ENCODE measurements at regions of chr18 and their contacts with region 1.

Region 1: DNA sequence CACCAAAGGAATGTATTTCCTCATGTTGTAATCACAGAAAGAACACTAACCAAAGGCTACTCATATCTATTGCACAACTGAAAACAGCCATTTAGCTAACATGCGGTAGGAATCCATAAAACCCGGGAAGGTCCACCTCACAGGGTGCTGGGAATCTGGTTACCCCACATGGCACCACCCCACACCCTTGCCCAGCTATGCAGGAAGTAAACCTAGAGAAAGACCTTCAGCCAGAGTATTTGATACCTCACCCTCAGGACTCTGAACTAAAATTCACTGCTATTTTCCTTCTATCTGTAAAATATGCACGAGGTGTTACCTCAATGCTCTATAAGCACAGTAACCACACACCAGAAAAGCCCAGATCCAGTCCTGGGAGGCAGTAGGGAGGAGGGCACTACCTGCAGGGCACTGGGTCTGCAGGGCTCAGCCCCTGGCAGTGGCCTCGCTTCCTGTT is 45.8 kb downstream of the PTPN2 start:
- DNase-seq: peak; percentile 92 to 99
- H3K4me3 ChIP-seq: peak overlapping the region; percentile 45; the same call in 1 of the 2 replicates
- H3K27ac ChIP-seq: peak overlapping the region; percentile 100
- H3K4me1 ChIP-seq: peaks cover 53% of the 10 kb centered on the region
- H3K27me3 ChIP-seq: no peaks in the 10 kb centered on the region
- CTCF ChIP-seq: no peak

Region 2: GRCh38 chr18:12679183-12679786 is 158.9 kb before region 1 on chr18:
- CTCF ChIA-PET with region 1: no interaction called
- POLR2A ChIA-PET with region 1: no interaction called
- intact Hi-C with region 1: no loop called
- DNase-seq: no peak
- H3K4me3 ChIP-seq: no peak overlapping the region
- H3K27ac ChIP-seq: no peak overlapping the region
- H3K4me1 ChIP-seq: no peaks in the 10 kb centered on the region
- H3K27me3 ChIP-seq: no peaks in the 10 kb centered on the region
- CTCF ChIP-seq: no peak

Region 3: GRCh38 chr18:12862467-12862866 is 24.3 kb after region 1 on chr18:
- CTCF ChIA-PET with region 1: no interaction called
- POLR2A ChIA-PET with region 1: interaction called, 3 read pairs
- intact Hi-C with region 1: loop called (anchors 1 kb)
- DNase-seq: peak; percentile 87 to 88
- H3K4me3 ChIP-seq: no peak overlapping the region
- H3K27ac ChIP-seq: peak overlapping the region; percentile 85
- H3K4me1 ChIP-seq: peaks cover 32% of the 10 kb centered on the region
- H3K27me3 ChIP-seq: no peaks in the 10 kb centered on the region
- CTCF ChIP-seq: no peak

Region 4: DNA sequence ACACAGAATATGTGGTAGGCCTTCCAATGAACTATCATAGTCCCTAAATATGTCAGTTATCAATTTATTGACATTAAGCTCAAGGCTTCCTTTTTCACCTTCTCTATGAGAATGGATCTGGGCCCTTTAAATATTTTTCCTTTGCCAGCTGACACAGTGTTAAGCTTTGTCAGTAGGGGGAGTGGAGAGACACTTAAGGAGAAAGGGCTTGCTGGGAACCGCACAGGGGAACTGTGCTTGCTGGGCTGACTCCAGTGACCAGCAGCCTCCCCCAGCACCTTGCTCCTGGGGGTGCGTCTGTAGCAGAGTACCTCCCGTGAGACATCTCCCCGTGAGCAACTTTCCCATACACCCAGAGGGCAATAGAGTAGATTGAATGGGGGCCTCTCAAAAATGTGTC is 52.3 kb after region 1 on chr18:
- CTCF ChIA-PET with region 1: interaction called, 4 read pairs
- POLR2A ChIA-PET with region 1: interaction called, 12 read pairs
- intact Hi-C with region 1: loop called (anchors 1 kb)
- DNase-seq: peak; percentile 22 to 59
- H3K4me3 ChIP-seq: peak overlapping the region; percentile 6; the same call in 1 of the 2 replicates
- H3K27ac ChIP-seq: peak overlapping the region; percentile 95
- H3K4me1 ChIP-seq: peaks cover 41% of the 10 kb centered on the region
- H3K27me3 ChIP-seq: no peaks in the 10 kb centered on the region
- CTCF ChIP-seq: peak; percentile 45; the same call in 1 of the 2 replicates

Region 5: DNA sequence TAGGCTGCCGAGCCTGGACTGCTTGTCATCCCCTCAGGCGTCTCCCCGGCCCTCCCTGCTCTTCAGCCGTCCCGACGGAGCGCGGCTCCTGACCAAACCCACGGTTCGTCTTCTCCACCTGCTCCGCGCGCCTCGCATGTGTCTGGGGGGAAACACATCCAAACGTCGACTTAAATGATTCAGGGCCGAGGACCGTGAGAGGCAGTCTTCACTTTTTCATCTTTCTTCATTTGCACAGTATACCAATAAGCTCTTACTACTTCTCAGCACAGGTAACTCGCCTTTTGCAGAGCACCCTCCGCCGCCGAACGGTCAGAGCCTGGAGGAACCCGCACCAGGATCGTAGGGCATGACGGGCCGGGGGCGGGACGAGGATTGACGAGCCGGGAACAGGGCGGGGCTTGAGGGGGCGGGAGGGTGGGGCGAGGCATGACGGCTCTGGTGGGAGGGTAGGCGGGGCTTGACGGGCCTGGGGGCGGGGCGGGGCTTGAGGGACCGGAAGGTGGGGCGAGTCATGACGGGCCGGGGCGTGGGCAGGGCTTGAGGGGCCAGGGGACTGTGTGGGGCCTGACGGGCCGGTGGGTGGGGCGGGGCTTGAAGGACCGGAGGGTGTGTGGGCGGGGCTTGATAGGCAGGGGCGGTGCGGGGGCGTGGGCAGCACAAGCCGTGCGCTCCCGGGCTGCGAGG is 109.3 kb after region 1 on chr18 and contains the start of gene SEH1L:
- CTCF ChIA-PET with region 1: interaction called, 3 read pairs
- POLR2A ChIA-PET with region 1: no interaction called
- intact Hi-C with region 1: loop called (anchors 2 kb)
- DNase-seq: peak; percentile 81 to 98
- H3K4me3 ChIP-seq: peak within 1 kb of the TSS; percentile 98
- H3K27ac ChIP-seq: peak within 1 kb of the TSS; percentile 95
- H3K4me1 ChIP-seq: peaks cover 32% of the 10 kb centered on the region
- H3K27me3 ChIP-seq: no peaks in the 10 kb centered on the region
- CTCF ChIP-seq: no peak
- total RNA-seq, gene SEH1L: 98.3 and 101 TPM in 2 replicates